ENCODE measurements at regions of chr9 and their contacts with region 1.

Region 1: GRCh38 chr9:121399883-121400607 is 30.0 kb upstream of the STOM start:
- DNase-seq: peak; percentile 75 to 90 (median 86)
- H3K4me3 ChIP-seq: no peak overlapping the region
- H3K27ac ChIP-seq: no peak overlapping the region
- H3K4me1 ChIP-seq: peaks cover 0 to 29% (median 5%) of the 10 kb centered on the region in 4 experiments
- H3K27me3 ChIP-seq: no peaks in the 10 kb centered on the region

Region 2: GRCh38 chr9:121326130-121326838 is 73.8 kb before region 1 on chr9:
- CTCF ChIA-PET with region 1: interaction called, 236 read pairs
- POLR2A ChIA-PET with region 1: no interaction called
- DNase-seq: no peak
- H3K4me3 ChIP-seq: no peak overlapping the region
- H3K27ac ChIP-seq: no peak overlapping the region
- H3K4me1 ChIP-seq: peaks cover 0 to 7% (median 4%) of the 10 kb centered on the region in 4 experiments
- H3K27me3 ChIP-seq: no peaks in the 10 kb centered on the region

Region 3: DNA sequence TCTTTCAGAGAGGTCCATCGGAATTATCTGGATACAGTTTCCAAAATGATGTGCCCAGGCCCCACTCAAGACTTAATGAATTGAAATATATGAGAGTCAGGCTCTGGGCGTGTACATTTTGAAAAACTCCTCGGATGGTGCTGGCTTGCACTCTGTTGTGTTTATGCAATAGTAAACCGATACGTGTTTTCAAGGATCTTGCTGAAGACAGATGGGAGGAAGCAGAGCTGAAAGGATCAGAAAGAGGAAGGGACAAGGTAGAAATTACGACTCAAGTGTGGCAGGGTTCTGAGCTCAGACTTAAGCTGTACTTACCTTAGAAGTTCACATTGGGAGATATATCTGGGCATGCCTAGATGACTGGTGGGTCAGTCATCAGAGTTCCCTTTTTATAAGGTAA is 16.3 kb before region 1 on chr9:
- CTCF ChIA-PET with region 1: interaction called, 35 read pairs
- POLR2A ChIA-PET with region 1: no interaction called
- DNase-seq: peak in 2 of 3 donors; percentile 51 to 59
- H3K4me3 ChIP-seq: peak overlapping the region in 1 of 7 experiments; percentile 20
- H3K27ac ChIP-seq: no peak overlapping the region
- H3K4me1 ChIP-seq: peaks cover 0 to 20% (median 2%) of the 10 kb centered on the region in 4 experiments
- H3K27me3 ChIP-seq: no peaks in the 10 kb centered on the region

Region 4: DNA sequence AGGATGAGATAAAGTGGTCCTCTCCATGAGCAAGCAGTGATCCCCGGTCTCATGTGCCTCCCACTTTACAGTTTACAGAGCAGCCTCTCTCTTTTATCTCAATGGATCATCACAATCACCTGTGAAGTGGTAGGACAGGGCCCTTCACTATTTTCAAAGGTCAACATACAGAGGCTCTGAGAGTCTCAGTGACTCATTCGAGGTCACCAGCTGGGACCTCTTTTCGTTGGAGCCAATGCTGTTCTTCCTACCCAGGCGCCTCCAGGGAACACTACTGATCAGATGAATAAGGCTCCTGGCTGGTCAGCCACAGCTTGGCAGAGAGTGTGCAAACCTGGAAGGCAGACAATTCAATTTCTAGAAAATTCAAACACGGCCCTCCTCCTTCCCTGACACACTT is 83.0 kb after region 1 on chr9:
- CTCF ChIA-PET with region 1: no interaction called
- POLR2A ChIA-PET with region 1: no interaction called
- DNase-seq: no peak
- H3K4me3 ChIP-seq: no peak overlapping the region
- H3K27ac ChIP-seq: no peak overlapping the region
- H3K4me1 ChIP-seq: peaks cover 13 to 32% (median 27%) of the 10 kb centered on the region in 4 experiments
- H3K27me3 ChIP-seq: no peaks in the 10 kb centered on the region

Region 5: GRCh38 chr9:121529237-121529987 is 129.4 kb after region 1 on chr9:
- CTCF ChIA-PET with region 1: no interaction called
- POLR2A ChIA-PET with region 1: no interaction called
- DNase-seq: no peak
- H3K4me3 ChIP-seq: no peak overlapping the region
- H3K27ac ChIP-seq: no peak overlapping the region
- H3K4me1 ChIP-seq: peaks cover 0 to 3% (median 0%) of the 10 kb centered on the region in 4 experiments
- H3K27me3 ChIP-seq: no peaks in the 10 kb centered on the region

Measured in common myeloid progenitor, CD34-positive (primary cell).